ENCODE measurements at regions of chr17 and their contacts with region 1.

Region 1: GRCh38 chr17:41738077-41738735 is 3.8 kb upstream of the HAP1 start:
- DNase-seq: peak; percentile 72 to 82
- ATAC-seq: peak; percentile 83 to 93 (median 88)
- H3K4me3 ChIP-seq: no peak overlapping the region
- H3K27ac ChIP-seq: no peak overlapping the region
- H3K4me1 ChIP-seq: peaks cover 7 to 27% (median 22%) of the 10 kb centered on the region in 9 donors
- H3K27me3 ChIP-seq: peaks cover 19 to 47% (median 47%) of the 10 kb centered on the region in 7 donors
- CTCF ChIP-seq: peak; percentile 97 to 100 (median 99)

Region 2: DNA sequence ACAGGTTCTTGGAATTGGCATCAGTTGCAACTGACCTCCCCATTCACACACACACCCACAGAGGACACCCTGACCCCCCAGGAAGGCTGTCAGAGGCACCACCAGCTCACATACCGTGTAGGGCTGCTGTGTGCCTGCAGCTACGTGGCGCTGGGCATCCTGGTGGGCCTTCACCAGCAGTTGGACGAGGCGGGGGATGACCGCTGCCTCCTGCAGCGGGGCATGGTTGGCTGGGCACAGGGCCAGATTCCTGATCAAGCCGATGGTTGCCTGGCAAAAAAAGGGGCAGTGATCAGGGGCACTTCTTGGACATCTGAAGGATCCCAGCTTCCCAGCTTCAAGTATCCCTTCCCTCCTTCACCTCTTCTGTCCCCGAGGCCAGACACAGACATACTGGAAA is 20.4 kb after region 1 on chr17:
- intact Hi-C with region 1: no loop called
- DNase-seq: no peak
- ATAC-seq: no peak
- H3K4me3 ChIP-seq: no peak overlapping the region
- H3K27ac ChIP-seq: no peak overlapping the region
- H3K4me1 ChIP-seq: no peaks in the 10 kb centered on the region
- H3K27me3 ChIP-seq: no peaks in the 10 kb centered on the region
- CTCF ChIP-seq: no peak

Region 3: DNA sequence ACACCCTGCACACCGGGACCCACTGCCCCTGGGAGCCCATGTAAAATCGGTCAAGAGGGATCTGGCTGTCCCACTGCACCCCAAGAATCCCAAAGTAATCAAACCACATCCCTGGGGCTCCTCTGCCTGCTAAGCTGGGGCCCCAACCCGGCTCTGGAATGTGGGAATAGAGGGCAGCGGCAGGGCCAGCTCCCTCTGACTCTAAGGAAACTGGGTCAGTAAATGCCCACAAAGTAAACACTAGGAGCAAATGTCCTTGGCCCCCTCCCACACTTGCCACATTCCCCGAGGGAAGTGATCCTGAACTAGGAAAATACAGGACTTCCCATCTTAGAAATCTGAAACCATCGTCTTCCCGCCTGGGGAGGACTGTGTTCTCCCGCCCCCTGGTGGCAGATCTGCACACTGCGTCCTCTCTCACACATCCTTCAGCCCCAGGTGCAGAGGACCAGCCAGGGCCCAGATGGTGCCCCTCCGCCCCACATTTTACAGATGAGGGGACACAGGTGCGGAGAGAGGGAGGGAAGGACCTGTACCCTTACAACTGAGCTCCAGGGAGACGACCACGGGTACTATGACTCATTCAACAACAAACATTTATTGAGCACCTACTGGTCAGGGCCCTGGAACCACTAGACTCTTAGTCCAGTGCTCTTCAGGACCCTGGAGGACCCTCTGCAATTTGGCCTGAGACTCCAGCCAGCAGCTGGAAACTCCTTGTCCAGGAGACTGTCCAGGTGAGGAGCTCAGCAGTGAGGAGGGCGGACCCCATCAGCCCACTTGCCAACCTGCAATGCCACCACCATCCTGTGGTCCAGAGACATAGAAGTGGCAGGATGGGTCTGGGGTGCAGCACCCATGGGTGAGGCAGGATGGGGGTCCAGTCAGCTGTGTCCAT is 63.4 kb after region 1 on chr17:
- intact Hi-C with region 1: loop called (anchors 1 to 2 kb)
- DNase-seq: peak; percentile 84 to 85
- ATAC-seq: peak; percentile 78 to 94 (median 89)
- H3K4me3 ChIP-seq: peak overlapping the region in 3 of 10 donors; percentile 22 to 31 (median 26)
- H3K27ac ChIP-seq: peak overlapping the region in 2 of 10 donors; percentile 41 to 54
- H3K4me1 ChIP-seq: peaks cover 2 to 17% (median 11%) of the 10 kb centered on the region in 9 donors
- H3K27me3 ChIP-seq: no peaks in the 10 kb centered on the region
- CTCF ChIP-seq: peak; percentile 92 to 99 (median 97)

Region 4: GRCh38 chr17:41844971-41845370 is 106.8 kb after region 1 on chr17:
- intact Hi-C with region 1: no loop called
- DNase-seq: no peak
- ATAC-seq: no peak
- H3K4me3 ChIP-seq: no peak overlapping the region
- H3K27ac ChIP-seq: no peak overlapping the region
- H3K4me1 ChIP-seq: peaks cover 0 to 12% (median 0%) of the 10 kb centered on the region in 9 donors
- H3K27me3 ChIP-seq: no peaks in the 10 kb centered on the region
- CTCF ChIP-seq: no peak